Activated CD4-positive, alpha-beta T cell treated with anti-CD3 and anti-CD28 coated beads for 36 hours (primary cell): ENCODE measurements at regions of chr5 and their contacts with region 1.

Region 1: GRCh38 chr5:173057062-173057924 is 1.1 kb downstream of the CREBRF start:
- DNase-seq: peak; percentile 100
- ATAC-seq: peak; percentile 90
- H3K4me3 Mint-ChIP-seq: peak overlapping the region; percentile 95
- H3K27ac Mint-ChIP-seq: peak overlapping the region; percentile 97
- H3K4me1 Mint-ChIP-seq: peaks cover 53% of the 10 kb centered on the region
- H3K27me3 Mint-ChIP-seq: no peaks in the 10 kb centered on the region

Region 2: GRCh38 chr5:172179361-172179989 is 877.8 kb before region 1 on chr5:
- CTCF ChIA-PET with region 1: no interaction called
- POLR2A ChIA-PET with region 1: no interaction called
- intact Hi-C with region 1: loop called in 1 of 2 experiments (anchors 5 kb)
- DNase-seq: peak; percentile 60
- ATAC-seq: peak; percentile 8
- H3K4me3 Mint-ChIP-seq: peak overlapping the region; percentile 75
- H3K27ac Mint-ChIP-seq: peak overlapping the region; percentile 99
- H3K4me1 Mint-ChIP-seq: peaks cover 98% of the 10 kb centered on the region
- H3K27me3 Mint-ChIP-seq: no peaks in the 10 kb centered on the region

Region 3: DNA sequence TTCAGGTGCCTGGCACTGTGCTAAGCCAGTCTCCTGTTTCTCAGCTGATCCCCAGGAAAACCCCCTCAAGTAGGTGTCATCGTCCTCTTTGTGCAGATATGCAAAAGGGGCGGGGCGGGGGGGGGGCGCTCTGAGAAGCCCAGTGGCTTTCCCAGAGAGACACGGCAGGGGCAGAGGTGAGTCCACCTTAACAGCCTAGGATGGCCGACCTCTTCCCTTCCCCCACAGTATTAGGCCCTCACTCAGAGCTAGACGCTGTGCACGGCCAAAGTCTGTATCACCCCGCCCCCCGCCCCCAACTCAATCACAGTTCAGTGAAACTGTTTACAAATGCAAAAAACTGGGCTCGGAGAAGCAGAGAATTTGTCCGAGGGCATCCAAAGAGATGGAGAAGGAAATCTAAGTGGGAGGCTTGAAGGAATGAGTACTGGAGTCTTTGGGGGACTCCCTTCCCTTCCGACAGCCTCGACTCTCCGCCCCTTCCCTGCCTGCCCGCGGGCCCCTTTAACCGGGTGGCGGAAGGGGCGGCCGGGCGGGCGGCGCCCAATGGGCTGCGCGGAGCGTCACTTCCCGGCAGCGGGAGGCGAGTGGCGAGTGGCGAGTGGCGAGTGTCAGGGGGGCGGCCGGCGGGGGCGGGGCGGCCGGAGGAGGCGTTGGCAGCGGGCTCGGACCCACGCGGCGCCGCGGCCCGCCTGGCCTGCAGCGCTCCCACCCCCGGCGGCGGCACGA is 223.4 kb before region 1 on chr5 and contains the start of gene ERGIC1:
- CTCF ChIA-PET with region 1: no interaction called
- POLR2A ChIA-PET with region 1: no interaction called
- intact Hi-C with region 1: loop called in 1 of 2 experiments (anchors 5 kb)
- DNase-seq: peak; percentile 79
- ATAC-seq: peak; percentile 77
- H3K4me3 Mint-ChIP-seq: peak within 1 kb of the TSS; percentile 79
- H3K27ac Mint-ChIP-seq: peak within 1 kb of the TSS; percentile 84
- H3K4me1 Mint-ChIP-seq: peaks cover 42% of the 10 kb centered on the region
- H3K27me3 Mint-ChIP-seq: no peaks in the 10 kb centered on the region
- total RNA-seq, gene ERGIC1: 40.3 to 50.0 TPM

Region 4: DNA sequence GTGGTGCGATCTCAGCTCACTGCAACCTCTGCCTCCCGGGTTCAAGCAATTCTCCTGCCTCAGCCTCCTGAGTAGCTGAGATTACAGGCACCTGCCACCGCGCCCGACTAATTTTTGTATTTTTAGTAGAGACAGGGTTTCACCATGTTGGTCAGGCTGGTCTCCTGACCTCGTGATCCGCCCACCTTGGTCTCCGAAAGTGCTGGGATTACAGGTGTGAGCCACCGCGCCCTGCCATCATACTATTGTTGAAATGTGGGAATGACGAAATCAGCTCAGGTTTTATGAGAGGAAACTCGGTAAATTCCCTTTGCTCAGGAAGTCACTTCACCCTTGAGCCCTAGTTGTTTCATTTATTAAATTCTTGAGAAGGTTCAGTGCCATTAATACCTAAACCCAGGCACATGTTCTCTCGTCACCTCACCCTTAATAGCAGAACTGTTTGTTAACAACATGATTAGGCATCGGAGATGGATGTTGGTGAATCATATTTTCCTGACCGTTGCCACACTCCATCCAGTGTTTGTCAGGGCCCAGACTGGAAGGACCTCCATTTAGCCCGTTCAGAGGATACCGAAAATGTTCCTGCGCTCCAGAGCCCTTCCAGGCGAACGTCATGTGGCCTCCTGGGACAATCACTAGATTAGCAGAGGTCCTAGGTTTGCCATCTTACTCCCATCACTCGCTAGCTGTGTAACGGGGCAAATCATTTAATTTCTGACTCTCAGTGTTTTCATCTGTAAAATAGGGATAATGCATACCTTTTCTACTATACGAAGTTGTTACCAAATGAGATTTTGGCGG is 21.2 kb before region 1 on chr5:
- CTCF ChIA-PET with region 1: interaction called, 4 read pairs
- POLR2A ChIA-PET with region 1: interaction called, 7 read pairs
- intact Hi-C with region 1: loop called (anchors 1 kb)
- DNase-seq: peak; percentile 74
- ATAC-seq: peak; percentile 39
- H3K4me3 Mint-ChIP-seq: peak overlapping the region; percentile 59
- H3K27ac Mint-ChIP-seq: peak overlapping the region; percentile 96
- H3K4me1 Mint-ChIP-seq: peaks cover 62% of the 10 kb centered on the region
- H3K27me3 Mint-ChIP-seq: no peaks in the 10 kb centered on the region

Region 5: GRCh38 chr5:173472141-173472543 is 414.8 kb after region 1 on chr5:
- CTCF ChIA-PET with region 1: no interaction called
- POLR2A ChIA-PET with region 1: no interaction called
- intact Hi-C with region 1: no loop called
- DNase-seq: no peak
- ATAC-seq: no peak
- H3K4me3 Mint-ChIP-seq: no peak overlapping the region
- H3K27ac Mint-ChIP-seq: no peak overlapping the region
- H3K4me1 Mint-ChIP-seq: no peaks in the 10 kb centered on the region
- H3K27me3 Mint-ChIP-seq: peaks cover 4% of the 10 kb centered on the region

Region 6: DNA sequence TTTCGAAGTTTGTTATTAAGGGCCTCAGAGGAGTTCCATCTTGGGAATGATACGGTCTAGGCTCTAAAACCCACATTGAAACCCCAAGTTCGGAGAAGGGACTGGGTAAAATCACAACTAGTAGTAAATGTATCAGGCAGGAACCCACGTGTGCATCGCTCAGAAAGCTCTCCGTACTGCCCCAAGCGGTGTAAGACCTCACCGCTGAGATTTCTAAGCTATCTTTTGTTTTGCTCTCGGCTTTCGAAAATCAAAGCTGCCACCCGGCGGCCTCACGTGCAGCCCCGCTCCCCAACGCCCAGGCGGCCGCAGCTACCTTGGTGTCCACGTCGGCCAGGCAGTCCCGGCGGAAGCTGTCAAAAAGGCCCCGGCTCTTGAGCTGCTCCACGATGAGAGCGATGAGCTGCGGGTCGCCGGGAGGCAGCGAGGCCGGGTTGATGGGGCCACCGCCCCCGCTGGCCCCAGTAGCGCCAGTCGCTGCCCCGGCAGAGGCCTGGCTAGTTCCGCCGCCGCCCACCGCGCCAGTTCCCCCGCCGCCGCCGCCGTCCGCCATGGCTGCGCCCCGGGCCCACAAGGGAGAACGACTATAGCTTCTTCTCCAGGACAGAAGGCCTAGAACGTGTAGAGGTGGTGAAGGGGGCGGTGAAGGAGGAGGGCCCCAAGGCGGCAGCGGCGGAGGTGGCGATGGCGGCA is 558.7 kb after region 1 on chr5:
- CTCF ChIA-PET with region 1: no interaction called
- POLR2A ChIA-PET with region 1: no interaction called
- intact Hi-C with region 1: loop called in 1 of 2 experiments (anchors 1 kb)
- DNase-seq: peak; percentile 84
- ATAC-seq: peak; percentile 63
- H3K4me3 Mint-ChIP-seq: peak overlapping the region; percentile 95
- H3K27ac Mint-ChIP-seq: peak overlapping the region; percentile 83
- H3K4me1 Mint-ChIP-seq: peaks cover 56% of the 10 kb centered on the region
- H3K27me3 Mint-ChIP-seq: no peaks in the 10 kb centered on the region